Activated CD4-positive, alpha-beta memory T cell treated with anti-CD3 and anti-CD28 coated beads, Interleukin-2, amount 10 ng/mL, durations not matched to agents 7 days and 5 days (primary cell): ENCODE measurements at regions of chr2 and their contacts with region 1.

Region 1: DNA sequence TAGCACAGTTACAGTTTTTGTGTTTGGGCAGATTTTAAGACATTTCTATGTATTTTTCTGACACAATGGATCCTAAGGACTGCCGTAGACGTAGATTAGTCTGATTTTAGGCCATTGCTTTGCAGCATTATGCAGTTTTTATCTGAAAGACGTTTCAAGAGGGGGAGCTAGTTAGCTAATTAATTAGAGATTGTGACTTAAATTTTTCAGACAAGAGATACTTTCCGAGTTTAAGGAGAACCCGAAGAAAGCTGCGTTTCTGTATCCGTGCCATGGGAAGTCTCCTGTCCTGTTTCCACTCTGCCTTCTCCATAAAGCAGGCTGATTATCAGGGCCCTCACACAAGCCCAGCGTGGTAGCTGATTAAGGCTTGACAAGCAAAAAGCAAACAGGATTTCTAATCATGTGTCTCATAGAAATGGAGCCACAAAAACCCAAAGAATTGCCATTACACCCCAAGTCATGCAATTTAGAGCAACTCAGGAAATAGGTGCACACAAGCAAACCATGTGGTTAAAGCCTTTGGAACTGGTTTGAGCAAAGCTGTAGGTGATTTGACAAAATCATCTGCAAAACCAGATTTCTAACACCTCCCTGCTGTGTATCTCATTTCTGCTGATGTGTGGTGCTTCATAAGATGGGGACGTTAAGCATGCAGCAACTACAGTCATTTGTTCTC is 808.1 kb downstream of the RNF144A start:
- DNase-seq: peak; percentile 63
- H3K4me3 Mint-ChIP-seq: peak overlapping the region; percentile 80
- H3K27ac Mint-ChIP-seq: peak overlapping the region; percentile 94
- H3K4me1 Mint-ChIP-seq: peaks cover 58% of the 10 kb centered on the region
- H3K27me3 Mint-ChIP-seq: no peaks in the 10 kb centered on the region

Region 2: GRCh38 chr2:7427293-7428060 is 297.8 kb before region 1 on chr2:
- CTCF ChIA-PET with region 1: interaction called, 22 read pairs
- POLR2A ChIA-PET with region 1: interaction called, 51 read pairs
- DNase-seq: no peak
- H3K4me3 Mint-ChIP-seq: peak overlapping the region; percentile 35
- H3K27ac Mint-ChIP-seq: peak overlapping the region; percentile 59
- H3K4me1 Mint-ChIP-seq: peaks cover 43% of the 10 kb centered on the region
- H3K27me3 Mint-ChIP-seq: peaks cover 5% of the 10 kb centered on the region

Region 3: DNA sequence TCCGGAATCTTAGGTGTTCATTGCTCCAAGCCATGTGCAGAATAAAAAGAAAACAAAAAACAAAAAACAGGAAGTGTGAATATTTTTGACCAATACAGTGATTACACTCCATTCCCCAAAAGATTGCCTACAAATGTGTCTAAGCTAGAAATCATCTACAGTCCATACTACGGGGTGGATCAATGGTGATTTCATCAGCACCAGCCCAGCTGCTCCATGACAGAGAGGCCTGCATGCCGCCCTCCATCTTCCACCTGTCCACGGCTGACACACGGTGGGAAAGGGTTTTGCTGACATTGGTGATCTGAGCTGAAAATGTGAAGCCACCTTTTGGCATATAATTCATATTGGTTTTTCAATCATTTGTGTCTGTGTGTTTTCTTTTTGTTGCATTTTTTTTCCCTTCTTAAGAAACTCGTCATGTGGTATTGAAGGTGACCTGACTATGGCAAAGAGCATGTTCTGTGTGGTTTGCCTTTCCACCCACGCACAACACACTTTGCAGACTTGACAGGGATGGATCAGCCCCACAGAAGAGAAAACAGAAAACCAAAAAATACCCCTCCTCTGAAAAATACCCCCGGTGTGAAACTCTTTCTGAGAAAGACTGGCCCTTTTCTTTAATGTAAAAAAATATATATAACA is 275.0 kb before region 1 on chr2:
- CTCF ChIA-PET with region 1: interaction called, 5 read pairs
- POLR2A ChIA-PET with region 1: interaction called, 62 read pairs
- DNase-seq: peak; percentile 56
- H3K4me3 Mint-ChIP-seq: no peak overlapping the region
- H3K27ac Mint-ChIP-seq: peak overlapping the region; percentile 97
- H3K4me1 Mint-ChIP-seq: peaks cover 68% of the 10 kb centered on the region
- H3K27me3 Mint-ChIP-seq: no peaks in the 10 kb centered on the region

Region 4: DNA sequence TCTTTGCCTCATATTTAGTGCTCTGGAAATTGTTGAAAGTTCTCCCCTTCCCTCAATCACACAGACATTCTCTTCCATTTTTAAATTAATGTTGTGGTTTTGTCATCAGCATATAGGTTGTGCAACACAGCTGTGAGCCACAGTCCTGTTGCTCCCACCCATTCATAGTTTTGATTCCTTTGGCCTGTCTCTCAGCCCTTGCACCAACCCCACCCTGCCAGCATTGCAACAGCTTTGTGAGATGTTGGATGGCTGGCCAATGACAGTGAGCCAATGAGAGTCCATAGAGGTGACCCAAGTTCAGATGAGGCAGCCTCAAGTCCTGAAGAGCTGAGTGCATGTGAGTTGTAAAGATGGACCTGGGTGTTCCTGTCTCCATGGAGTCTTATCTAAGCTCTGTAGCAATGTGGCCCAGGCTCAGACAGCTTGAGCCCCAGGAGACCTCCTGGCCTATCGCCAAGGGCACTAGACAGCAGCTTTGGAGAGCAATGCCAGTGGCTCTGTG is 32.6 kb before region 1 on chr2:
- CTCF ChIA-PET with region 1: interaction called, 4 read pairs
- POLR2A ChIA-PET with region 1: interaction called, 67 read pairs
- DNase-seq: no peak
- H3K4me3 Mint-ChIP-seq: peak overlapping the region; percentile 52
- H3K27ac Mint-ChIP-seq: peak overlapping the region; percentile 85
- H3K4me1 Mint-ChIP-seq: peaks cover 48% of the 10 kb centered on the region
- H3K27me3 Mint-ChIP-seq: no peaks in the 10 kb centered on the region

Region 5: GRCh38 chr2:7915302-7916091 is 190.2 kb after region 1 on chr2:
- CTCF ChIA-PET with region 1: no interaction called
- POLR2A ChIA-PET with region 1: no interaction called
- DNase-seq: no peak
- H3K4me3 Mint-ChIP-seq: no peak overlapping the region
- H3K27ac Mint-ChIP-seq: no peak overlapping the region
- H3K4me1 Mint-ChIP-seq: no peaks in the 10 kb centered on the region
- H3K27me3 Mint-ChIP-seq: no peaks in the 10 kb centered on the region

Region 6: DNA sequence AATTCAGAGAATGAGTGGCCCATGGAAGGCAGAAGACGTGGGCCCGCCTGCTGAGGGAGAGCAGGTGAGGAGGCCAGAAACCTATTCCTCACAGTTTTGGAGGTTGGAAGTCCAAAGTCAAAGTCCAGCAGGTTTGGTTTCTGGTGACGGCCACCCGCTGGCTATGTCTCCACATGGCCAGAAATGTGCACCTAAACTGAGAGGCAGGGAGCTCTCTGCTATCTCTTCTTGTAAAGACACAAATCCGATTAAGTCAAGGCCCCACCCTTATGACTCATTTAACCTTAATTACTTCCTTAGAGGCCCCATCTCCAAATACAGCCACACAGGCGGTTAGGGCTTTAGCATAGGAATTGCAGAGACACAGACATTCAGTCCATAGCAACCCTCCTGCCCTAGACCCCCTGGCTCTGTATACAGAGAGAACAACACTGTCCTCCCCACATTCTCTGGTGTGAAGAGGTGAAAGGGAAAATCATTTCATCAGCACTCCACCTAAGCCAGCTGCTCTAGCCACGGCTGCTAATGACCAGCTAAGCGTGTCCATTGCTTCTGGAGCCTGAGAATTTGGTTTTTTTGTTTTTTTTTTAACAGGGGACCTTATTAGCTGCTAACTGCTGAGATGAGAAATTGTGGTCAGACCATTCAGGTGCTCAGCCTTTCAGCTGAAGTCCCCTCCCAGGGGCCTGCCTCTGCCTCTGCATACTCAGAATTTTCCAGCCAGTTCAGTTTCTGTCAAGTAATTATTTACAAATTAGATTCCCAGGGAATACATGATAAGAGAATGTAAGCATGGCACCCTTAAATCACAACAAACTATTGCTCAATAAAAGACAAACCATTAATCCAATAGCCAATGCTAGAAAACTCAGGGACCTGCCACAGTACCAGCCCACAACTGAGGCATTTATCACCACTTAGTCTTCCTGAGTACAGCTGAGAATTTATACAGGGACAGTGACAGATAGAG is 587.8 kb after region 1 on chr2:
- CTCF ChIA-PET with region 1: interaction called, 3 read pairs
- POLR2A ChIA-PET with region 1: interaction called, 17 read pairs
- DNase-seq: peak; percentile 43
- H3K4me3 Mint-ChIP-seq: peak overlapping the region; percentile 69
- H3K27ac Mint-ChIP-seq: peak overlapping the region; percentile 90
- H3K4me1 Mint-ChIP-seq: peaks cover 77% of the 10 kb centered on the region
- H3K27me3 Mint-ChIP-seq: peaks cover 3% of the 10 kb centered on the region

Region 7: DNA sequence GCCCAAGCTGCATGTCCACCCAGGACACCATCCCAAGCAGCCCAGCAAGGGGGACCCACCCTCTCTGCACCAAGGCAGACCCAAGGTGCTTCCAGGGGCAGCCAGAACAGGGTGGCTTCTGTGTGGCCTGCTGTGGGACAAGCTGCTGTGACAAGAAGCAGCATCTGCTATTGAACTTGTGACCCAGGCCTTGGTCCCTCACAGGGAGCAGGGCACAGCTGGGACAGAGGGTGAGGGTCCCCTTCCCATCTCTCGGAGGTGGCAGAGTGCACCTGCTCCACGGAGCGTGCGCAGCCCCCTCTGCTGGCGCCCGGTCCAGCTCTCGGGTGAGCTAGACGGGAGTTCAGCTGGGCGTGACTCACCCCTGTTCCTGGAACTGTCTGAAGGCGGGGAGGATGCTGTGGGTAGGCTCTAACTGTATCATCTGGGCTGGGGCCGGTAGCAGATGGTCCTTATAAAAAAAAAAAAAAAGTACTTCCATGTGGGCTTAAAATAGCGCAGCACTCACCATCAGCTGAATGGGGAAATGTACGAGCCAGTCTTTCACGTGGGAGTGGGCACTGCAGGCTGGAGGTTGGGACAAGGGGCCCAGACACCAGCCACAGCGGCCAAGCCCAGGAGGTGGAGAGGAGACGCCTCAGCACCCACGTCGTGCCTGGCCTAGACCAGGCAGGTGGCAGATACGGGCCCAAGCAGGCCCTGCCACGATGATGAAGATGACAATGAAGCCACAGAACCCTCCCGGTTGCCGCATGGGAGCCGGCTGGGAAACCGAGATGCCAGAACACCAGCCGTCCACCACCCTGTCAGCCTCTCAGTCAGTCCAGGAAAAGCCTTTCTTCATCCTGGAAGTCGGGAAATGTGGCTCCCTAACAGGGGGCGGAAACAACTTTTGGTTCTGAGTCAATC is 819.7 kb after region 1 on chr2:
- CTCF ChIA-PET with region 1: interaction called, 11 read pairs
- POLR2A ChIA-PET with region 1: interaction called, 44 read pairs
- DNase-seq: peak; percentile 93
- H3K4me3 Mint-ChIP-seq: peak overlapping the region; percentile 39
- H3K27ac Mint-ChIP-seq: peak overlapping the region; percentile 100
- H3K4me1 Mint-ChIP-seq: peaks cover 81% of the 10 kb centered on the region
- H3K27me3 Mint-ChIP-seq: no peaks in the 10 kb centered on the region